ENCODE measurements at regions of chr3 and their contacts with region 1.

Region 1: GRCh38 chr3:43748179-43748578 is 57.4 kb downstream of the ABHD5 start:
- DNase-seq: no peak
- H3K4me3 ChIP-seq: no peak overlapping the region
- CTCF ChIP-seq: no peak

Region 2: DNA sequence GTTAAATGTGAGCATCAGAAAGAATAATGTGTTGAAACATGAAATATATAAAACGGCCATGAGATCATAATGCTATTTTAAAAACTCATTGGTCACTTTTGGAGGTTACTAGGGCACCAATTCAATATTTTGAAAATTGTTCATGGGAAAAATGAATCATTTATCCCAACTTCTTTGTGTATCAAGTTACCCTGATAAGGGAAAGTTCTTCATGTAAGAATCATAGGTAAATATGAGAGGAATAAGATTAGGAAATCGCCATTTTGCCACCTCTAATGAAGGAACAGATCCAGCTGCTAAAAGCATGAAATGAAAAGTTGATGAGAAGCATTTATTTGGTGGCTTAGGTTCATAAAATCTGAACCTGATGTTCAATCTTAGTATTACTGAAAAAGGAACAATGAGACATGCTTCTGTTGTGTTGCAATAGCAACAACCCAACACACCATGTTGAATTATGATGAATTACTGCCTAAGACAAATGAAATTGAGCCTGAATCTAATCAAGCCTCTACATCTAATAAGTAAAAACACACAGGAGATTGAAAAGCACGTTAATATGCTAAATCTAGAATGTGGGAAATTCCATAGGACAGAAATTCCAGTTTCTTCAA is 25.0 kb before region 1 on chr3:
- in situ Hi-C with region 1: no loop called
- DNase-seq: no peak
- H3K4me3 ChIP-seq: no peak overlapping the region
- CTCF ChIP-seq: no peak

Region 3: DNA sequence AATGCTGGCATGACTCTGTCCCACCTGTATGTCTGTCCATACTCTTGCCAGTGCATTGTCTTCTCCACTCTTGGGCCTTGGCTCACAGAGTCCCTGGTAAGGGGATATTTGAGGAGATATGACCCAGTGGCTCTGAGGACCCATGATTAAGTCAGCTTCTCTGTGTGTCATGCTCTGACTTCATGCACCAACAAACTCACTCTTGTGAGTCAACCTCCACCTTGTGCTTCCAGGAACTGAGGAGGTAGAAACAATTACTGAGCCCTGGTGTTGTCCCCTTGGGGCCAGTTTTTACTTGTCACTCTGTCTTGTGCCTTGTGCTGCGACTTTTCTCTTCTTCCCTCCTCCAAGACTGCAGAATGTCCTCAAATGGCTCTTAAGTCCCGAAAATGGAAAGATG is 69.6 kb after region 1 on chr3:
- in situ Hi-C with region 1: loop called (anchors 5 kb)
- DNase-seq: no peak
- H3K4me3 ChIP-seq: no peak overlapping the region
- CTCF ChIP-seq: no peak

Region 4: GRCh38 chr3:43838877-43839276 is 90.7 kb after region 1 on chr3:
- in situ Hi-C with region 1: no loop called
- DNase-seq: no peak
- H3K4me3 ChIP-seq: no peak overlapping the region
- CTCF ChIP-seq: peak; percentile 8